Endothelial cell of umbilical vein (primary cell): ENCODE measurements at regions of chr2 and their contacts with region 1.

Region 1: DNA sequence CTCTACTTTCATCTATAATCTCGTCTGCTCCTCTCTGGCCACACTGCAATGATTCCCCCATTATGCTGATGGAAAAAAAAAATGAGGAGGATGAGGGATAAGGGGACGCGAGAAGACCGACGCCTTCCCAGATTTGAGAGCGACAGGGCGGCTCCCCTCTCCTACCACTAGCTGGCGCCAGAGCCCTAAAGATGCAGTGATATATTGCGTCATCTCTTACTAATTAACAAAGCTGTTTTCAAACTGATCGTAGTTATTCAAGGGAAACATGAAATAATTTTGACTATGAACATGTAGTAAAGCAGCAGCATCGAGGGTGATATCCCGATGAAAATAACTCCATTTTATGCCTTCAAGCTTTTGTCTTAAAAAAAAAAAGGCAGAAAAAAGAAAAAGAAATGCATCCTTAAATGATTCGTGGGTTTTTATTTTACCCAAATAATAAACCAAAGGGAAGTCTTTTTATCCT is 48.0 kb upstream of the HNRNPA3 start:
- DNase-seq: peak; percentile 92
- H3K4me3 ChIP-seq: peak overlapping the region in 1 of 3 experiments; percentile 26
- H3K27ac ChIP-seq: peak overlapping the region; percentile 91
- H3K4me1 ChIP-seq: peaks cover 51% of the 10 kb centered on the region
- H3K27me3 ChIP-seq: no peaks in the 10 kb centered on the region
- CTCF ChIP-seq: peak; percentile 99 to 100
- POLR2A ChIP-seq: no peak

Region 2: GRCh38 chr2:176473177-176473576 is 691.4 kb before region 1 on chr2:
- CTCF ChIA-PET with region 1: no interaction called
- POLR2A ChIA-PET with region 1: no interaction called
- dilution Hi-C with region 1: no loop called
- intact Hi-C with region 1: no loop called
- DNase-seq: peak; percentile 58
- H3K4me3 ChIP-seq: peak overlapping the region in 2 of 3 experiments; percentile 19 to 38
- H3K27ac ChIP-seq: no peak overlapping the region
- H3K4me1 ChIP-seq: peaks cover 4% of the 10 kb centered on the region
- H3K27me3 ChIP-seq: no peaks in the 10 kb centered on the region
- CTCF ChIP-seq: no peak
- POLR2A ChIP-seq: no peak

Region 3: DNA sequence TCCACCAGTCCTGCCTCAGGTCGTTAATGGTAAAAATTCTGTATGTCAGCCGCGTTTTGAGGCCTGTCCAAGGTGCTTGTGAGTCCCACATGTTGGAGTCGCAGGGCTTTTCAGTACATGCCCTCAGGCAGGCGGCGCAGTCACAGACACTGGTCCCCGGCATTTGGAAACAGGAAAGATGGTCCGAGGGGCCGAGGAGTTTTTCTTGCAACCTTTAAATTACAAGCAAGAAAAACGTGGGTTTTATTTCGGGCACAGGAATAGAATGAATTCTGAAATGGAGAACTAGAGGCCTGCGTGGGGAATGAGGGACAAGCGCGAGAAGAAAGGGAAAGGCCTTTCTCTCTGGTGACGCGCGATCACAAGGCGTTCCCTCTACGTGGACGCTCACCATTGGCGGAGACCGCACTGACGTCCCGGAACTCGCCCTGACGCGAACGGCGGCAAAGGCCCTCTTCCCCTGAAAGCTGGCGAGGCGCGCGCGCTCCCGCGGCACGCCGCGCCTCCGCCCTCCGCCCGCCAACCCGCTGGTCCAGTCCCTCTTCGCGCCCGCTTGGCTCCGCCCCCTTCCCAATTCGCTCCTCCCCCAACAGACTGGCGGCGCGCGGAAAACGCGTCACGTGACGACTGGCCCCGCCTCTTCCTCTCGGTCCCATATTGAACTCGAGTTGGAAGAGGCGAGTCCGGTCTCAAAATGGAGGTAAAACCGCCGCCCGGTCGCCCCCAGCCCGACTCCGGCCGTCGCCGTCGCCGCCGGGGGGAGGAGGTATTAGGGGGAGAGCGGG is 47.7 kb after region 1 on chr2 and contains the start of gene HNRNPA3:
- CTCF ChIA-PET with region 1: interaction called, 44 read pairs
- POLR2A ChIA-PET with region 1: interaction called, 4 read pairs
- dilution Hi-C with region 1: no loop called
- intact Hi-C with region 1: loop called (anchors 1 kb)
- DNase-seq: peak; percentile 100
- H3K4me3 ChIP-seq: peak within 1 kb of the TSS; percentile 99 to 100 (median 100)
- H3K27ac ChIP-seq: peak within 1 kb of the TSS; percentile 100
- H3K4me1 ChIP-seq: peaks cover 33% of the 10 kb centered on the region
- H3K27me3 ChIP-seq: no peaks in the 10 kb centered on the region
- CTCF ChIP-seq: peak in 1 of 2 donors; percentile 2
- POLR2A ChIP-seq: peak; percentile 97
- total RNA-seq, gene HNRNPA3: 316 and 322 TPM in 2 replicates

Region 4: GRCh38 chr2:177254433-177255226 is 90.0 kb after region 1 on chr2:
- CTCF ChIA-PET with region 1: interaction called, 39 read pairs
- POLR2A ChIA-PET with region 1: no interaction called
- dilution Hi-C with region 1: loop called (anchors 10 kb)
- intact Hi-C with region 1: loop called (anchors 2 kb)
- DNase-seq: peak; percentile 64
- H3K4me3 ChIP-seq: no peak overlapping the region
- H3K27ac ChIP-seq: peak overlapping the region; percentile 19
- H3K4me1 ChIP-seq: peaks cover 55% of the 10 kb centered on the region
- H3K27me3 ChIP-seq: no peaks in the 10 kb centered on the region
- CTCF ChIP-seq: peak; percentile 65 to 68
- POLR2A ChIP-seq: no peak

Region 5: GRCh38 chr2:177332041-177332991 is 167.7 kb after region 1 on chr2:
- CTCF ChIA-PET with region 1: interaction called, 166 read pairs
- POLR2A ChIA-PET with region 1: no interaction called
- dilution Hi-C with region 1: no loop called
- intact Hi-C with region 1: loop called (anchors 1 kb)
- DNase-seq: peak; percentile 87
- H3K4me3 ChIP-seq: no peak overlapping the region
- H3K27ac ChIP-seq: peak overlapping the region; percentile 32
- H3K4me1 ChIP-seq: peaks cover 24% of the 10 kb centered on the region
- H3K27me3 ChIP-seq: no peaks in the 10 kb centered on the region
- CTCF ChIP-seq: peak; percentile 51 to 64
- POLR2A ChIP-seq: peak; percentile 25

Region 6: GRCh38 chr2:177419274-177419673 is 254.7 kb after region 1 on chr2:
- CTCF ChIA-PET with region 1: interaction called, 78 read pairs
- POLR2A ChIA-PET with region 1: no interaction called
- dilution Hi-C with region 1: no loop called
- intact Hi-C with region 1: loop called (anchors 1 kb)
- DNase-seq: no peak
- H3K4me3 ChIP-seq: no peak overlapping the region
- H3K27ac ChIP-seq: no peak overlapping the region
- H3K4me1 ChIP-seq: peaks cover 26% of the 10 kb centered on the region
- H3K27me3 ChIP-seq: no peaks in the 10 kb centered on the region
- CTCF ChIP-seq: no peak
- POLR2A ChIP-seq: no peak

Region 7: DNA sequence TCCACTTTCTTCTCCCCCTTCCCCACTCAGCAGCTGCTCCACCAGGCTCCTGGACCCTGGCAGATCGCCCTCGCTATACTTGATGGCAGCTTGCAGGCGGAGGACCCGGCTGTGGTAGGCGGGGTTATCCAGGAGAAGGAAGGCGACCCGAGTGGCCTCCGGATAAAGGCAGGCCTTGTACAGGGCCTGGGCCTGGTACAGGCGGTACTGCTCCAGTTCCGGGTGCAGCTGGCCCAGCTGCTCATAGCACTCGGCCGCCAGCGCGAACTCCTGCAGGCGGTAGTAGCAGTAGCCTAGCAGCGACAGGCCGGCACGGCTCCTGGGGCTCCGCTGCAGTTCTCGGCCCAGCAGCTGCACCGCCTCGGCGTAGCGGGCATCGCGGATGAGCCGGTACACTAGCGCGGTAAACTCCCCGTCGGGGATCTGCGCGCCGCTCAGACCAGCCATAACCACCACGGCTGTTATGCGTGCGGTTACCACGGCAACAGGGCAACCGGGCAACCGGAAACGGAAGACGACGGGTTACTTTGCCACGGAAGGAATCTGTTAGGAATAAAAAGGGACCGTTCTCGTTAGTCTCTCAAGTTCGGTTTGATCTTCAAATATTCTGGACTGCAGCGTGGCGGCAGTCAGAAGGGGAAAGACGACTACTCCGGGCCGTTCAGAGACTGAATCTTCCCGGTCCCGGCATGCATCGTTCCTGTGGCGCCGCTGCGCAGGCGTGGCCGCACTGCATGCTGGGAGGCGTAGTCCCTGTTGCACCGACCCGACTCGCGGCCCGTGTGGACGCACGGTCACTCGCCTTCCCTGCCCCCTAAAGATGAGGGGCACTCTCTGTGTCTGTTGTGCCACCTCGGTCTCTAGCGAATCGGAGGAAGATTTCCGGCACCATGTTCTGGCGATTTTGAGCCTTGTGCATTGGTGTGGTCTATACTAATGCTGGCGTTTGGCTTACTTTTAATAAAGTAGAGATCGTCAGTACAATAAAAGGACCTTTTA is 453.9 kb after region 1 on chr2:
- CTCF ChIA-PET with region 1: no interaction called
- POLR2A ChIA-PET with region 1: no interaction called
- dilution Hi-C with region 1: no loop called
- intact Hi-C with region 1: loop called (anchors 5 kb)
- DNase-seq: peak; percentile 94
- H3K4me3 ChIP-seq: peak overlapping the region; percentile 28 to 94 (median 46)
- H3K27ac ChIP-seq: peak overlapping the region; percentile 76
- H3K4me1 ChIP-seq: no peaks in the 10 kb centered on the region
- H3K27me3 ChIP-seq: no peaks in the 10 kb centered on the region
- CTCF ChIP-seq: no peak
- POLR2A ChIP-seq: peak; percentile 76

Region 8: GRCh38 chr2:177763532-177764265 is 599.1 kb after region 1 on chr2:
- CTCF ChIA-PET with region 1: interaction called, 51 read pairs
- POLR2A ChIA-PET with region 1: no interaction called
- dilution Hi-C with region 1: no loop called
- intact Hi-C with region 1: loop called (anchors 1 kb)
- DNase-seq: peak; percentile 70
- H3K4me3 ChIP-seq: no peak overlapping the region
- H3K27ac ChIP-seq: no peak overlapping the region
- H3K4me1 ChIP-seq: peaks cover under 1% of the 10 kb centered on the region
- H3K27me3 ChIP-seq: no peaks in the 10 kb centered on the region
- CTCF ChIP-seq: peak; percentile 82 to 90
- POLR2A ChIP-seq: no peak